ENCODE measurements at regions of chr10 and their contacts with region 1.

Region 1: GRCh38 chr10:96043033-96043932 is at the start of gene CCNJ:
- DNase-seq: no peak
- ATAC-seq: peak; percentile 97
- H3K4me3 ChIP-seq: peak within 1 kb of the TSS; percentile 88 to 90
- H3K27ac ChIP-seq: peak within 1 kb of the TSS; percentile 89
- H3K4me1 ChIP-seq: peaks cover 19% of the 10 kb centered on the region
- H3K27me3 ChIP-seq: peaks cover 2% of the 10 kb centered on the region
- CTCF ChIP-seq: peak; percentile 38
- total RNA-seq, gene CCNJ: 15.2 TPM

Region 2: GRCh38 chr10:94370501-94370900 is 1672.8 kb before region 1 on chr10:
- CTCF ChIA-PET with region 1: no interaction called
- POLR2A ChIA-PET with region 1: no interaction called
- in situ Hi-C with region 1: no loop called
- intact Hi-C with region 1: no loop called
- DNase-seq: no peak
- ATAC-seq: no peak
- H3K4me3 ChIP-seq: no peak overlapping the region
- H3K27ac ChIP-seq: no peak overlapping the region
- H3K4me1 ChIP-seq: no peaks in the 10 kb centered on the region
- H3K27me3 ChIP-seq: no peaks in the 10 kb centered on the region
- CTCF ChIP-seq: no peak

Region 3: GRCh38 chr10:95920798-95921426 is 122.4 kb before region 1 on chr10:
- CTCF ChIA-PET with region 1: interaction called, 13 read pairs
- POLR2A ChIA-PET with region 1: no interaction called
- in situ Hi-C with region 1: no loop called
- intact Hi-C with region 1: no loop called
- DNase-seq: no peak
- ATAC-seq: no peak
- H3K4me3 ChIP-seq: no peak overlapping the region
- H3K27ac ChIP-seq: no peak overlapping the region
- H3K4me1 ChIP-seq: no peaks in the 10 kb centered on the region
- H3K27me3 ChIP-seq: peaks cover 12% of the 10 kb centered on the region
- CTCF ChIP-seq: no peak

Measured in Panc1 (cell line).